Activated CD8-positive, alpha-beta T cell treated with anti-CD3 and anti-CD28 coated beads for 36 hours (primary cell): ENCODE measurements at regions of chr6 and their contacts with region 1.

Region 1: DNA sequence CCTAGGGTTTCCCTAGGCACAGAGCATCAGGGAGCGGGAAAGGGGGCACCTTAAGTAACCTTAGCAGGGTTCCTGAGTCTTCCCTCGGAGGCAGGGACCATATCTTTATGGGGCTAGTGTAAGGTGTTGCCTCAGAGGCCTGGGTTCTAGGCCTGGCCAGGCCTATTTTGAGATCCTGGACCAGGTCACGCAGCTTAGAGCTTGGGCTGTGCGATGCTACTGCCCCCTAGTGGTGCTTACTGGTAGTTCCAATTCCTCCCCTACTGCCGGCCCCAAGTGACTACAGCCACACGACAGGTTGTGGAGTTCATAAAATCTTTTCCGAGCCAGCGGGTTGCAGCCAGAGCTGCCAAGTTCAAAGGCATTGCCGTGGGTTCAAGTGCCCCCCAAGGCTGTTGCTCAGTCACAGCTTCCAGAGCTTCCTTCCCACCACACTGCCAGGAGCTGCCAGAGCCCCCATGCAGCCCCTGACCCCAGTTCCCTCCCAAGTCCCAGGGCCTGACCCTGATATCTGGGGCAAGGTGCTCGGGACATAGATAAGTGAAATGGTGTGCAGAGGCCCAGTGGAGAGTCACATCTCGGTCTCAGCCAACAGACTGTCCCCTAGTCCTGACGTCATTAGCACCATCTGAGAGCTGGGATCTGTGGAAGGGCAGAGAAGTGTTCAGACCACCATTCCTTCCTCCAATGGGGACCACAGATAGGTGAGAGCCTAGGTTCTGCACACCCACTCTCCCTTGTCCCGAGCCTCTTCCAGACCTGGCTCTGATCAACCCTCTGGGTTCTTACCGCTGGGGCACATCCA is 3.3 kb downstream of the LRRC73 start:
- DNase-seq: peak; percentile 90
- ATAC-seq: peak; percentile 85
- H3K4me3 Mint-ChIP-seq: no peak overlapping the region
- H3K27ac Mint-ChIP-seq: peak overlapping the region; percentile 25
- H3K4me1 Mint-ChIP-seq: peaks cover 8% of the 10 kb centered on the region
- H3K27me3 Mint-ChIP-seq: peaks cover 18% of the 10 kb centered on the region
- CTCF ChIP-seq: peak; percentile 89

Region 2: GRCh38 chr6:43228951-43229802 is 277.7 kb before region 1 on chr6 and contains the start of gene DNPH1:
- CTCF ChIA-PET with region 1: interaction called, 11 read pairs
- POLR2A ChIA-PET with region 1: interaction called, 3 read pairs
- intact Hi-C with region 1: no loop called
- DNase-seq: peak; percentile 78
- ATAC-seq: peak; percentile 75
- H3K4me3 Mint-ChIP-seq: peak within 1 kb of the TSS; percentile 95
- H3K27ac Mint-ChIP-seq: peak within 1 kb of the TSS; percentile 90
- H3K4me1 Mint-ChIP-seq: peaks cover 32% of the 10 kb centered on the region
- H3K27me3 Mint-ChIP-seq: no peaks in the 10 kb centered on the region
- CTCF ChIP-seq: peak; percentile 95
- total RNA-seq, gene DNPH1: 86.2 to 86.5 TPM

Region 3: GRCh38 chr6:43269273-43270007 is 237.4 kb before region 1 on chr6:
- CTCF ChIA-PET with region 1: interaction called, 5 read pairs
- POLR2A ChIA-PET with region 1: no interaction called
- intact Hi-C with region 1: loop called (anchors 5 kb)
- DNase-seq: peak; percentile 59
- ATAC-seq: peak; percentile 74
- H3K4me3 Mint-ChIP-seq: peak overlapping the region; percentile 31
- H3K27ac Mint-ChIP-seq: no peak overlapping the region
- H3K4me1 Mint-ChIP-seq: peaks cover 11% of the 10 kb centered on the region
- H3K27me3 Mint-ChIP-seq: peaks cover 16% of the 10 kb centered on the region
- CTCF ChIP-seq: no peak

Region 4: GRCh38 chr6:43308101-43308989 is 198.5 kb before region 1 on chr6 and contains the start of gene CRIP3:
- CTCF ChIA-PET with region 1: interaction called, 17 read pairs
- POLR2A ChIA-PET with region 1: no interaction called
- intact Hi-C with region 1: no loop called
- DNase-seq: peak; percentile 68
- ATAC-seq: peak; percentile 90
- H3K4me3 Mint-ChIP-seq: peak within 1 kb of the TSS; percentile 74
- H3K27ac Mint-ChIP-seq: no peak within 1 kb of the TSS
- H3K4me1 Mint-ChIP-seq: peaks cover 8% of the 10 kb centered on the region
- H3K27me3 Mint-ChIP-seq: peaks cover 3% of the 10 kb centered on the region
- CTCF ChIP-seq: peak; percentile 49
- total RNA-seq, gene CRIP3: 2.2 to 2.4 TPM

Region 5: DNA sequence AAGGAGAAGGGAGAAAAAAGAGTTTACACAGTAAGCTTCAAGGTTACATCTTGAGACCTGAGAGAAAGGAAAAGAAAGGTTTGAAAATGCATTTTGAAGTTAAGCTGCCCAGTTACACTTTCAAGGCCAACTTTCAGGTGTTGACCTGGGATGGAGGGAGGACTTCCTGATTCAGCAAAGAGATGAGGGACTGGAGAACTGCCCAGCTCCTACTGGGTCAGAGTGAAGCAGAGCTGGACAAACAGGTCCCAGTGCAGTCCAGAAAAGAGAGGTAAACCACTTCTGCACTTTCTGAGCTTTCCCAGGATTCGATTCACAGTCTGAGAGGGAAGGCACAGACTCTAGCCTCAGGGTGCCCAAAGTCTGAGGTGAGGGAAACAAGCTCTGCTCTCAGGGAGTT is 35.5 kb before region 1 on chr6:
- CTCF ChIA-PET with region 1: interaction called, 23 read pairs
- POLR2A ChIA-PET with region 1: no interaction called
- intact Hi-C with region 1: no loop called
- DNase-seq: no peak
- ATAC-seq: no peak
- H3K4me3 Mint-ChIP-seq: no peak overlapping the region
- H3K27ac Mint-ChIP-seq: no peak overlapping the region
- H3K4me1 Mint-ChIP-seq: no peaks in the 10 kb centered on the region
- H3K27me3 Mint-ChIP-seq: peaks cover 16% of the 10 kb centered on the region
- CTCF ChIP-seq: no peak

Region 6: DNA sequence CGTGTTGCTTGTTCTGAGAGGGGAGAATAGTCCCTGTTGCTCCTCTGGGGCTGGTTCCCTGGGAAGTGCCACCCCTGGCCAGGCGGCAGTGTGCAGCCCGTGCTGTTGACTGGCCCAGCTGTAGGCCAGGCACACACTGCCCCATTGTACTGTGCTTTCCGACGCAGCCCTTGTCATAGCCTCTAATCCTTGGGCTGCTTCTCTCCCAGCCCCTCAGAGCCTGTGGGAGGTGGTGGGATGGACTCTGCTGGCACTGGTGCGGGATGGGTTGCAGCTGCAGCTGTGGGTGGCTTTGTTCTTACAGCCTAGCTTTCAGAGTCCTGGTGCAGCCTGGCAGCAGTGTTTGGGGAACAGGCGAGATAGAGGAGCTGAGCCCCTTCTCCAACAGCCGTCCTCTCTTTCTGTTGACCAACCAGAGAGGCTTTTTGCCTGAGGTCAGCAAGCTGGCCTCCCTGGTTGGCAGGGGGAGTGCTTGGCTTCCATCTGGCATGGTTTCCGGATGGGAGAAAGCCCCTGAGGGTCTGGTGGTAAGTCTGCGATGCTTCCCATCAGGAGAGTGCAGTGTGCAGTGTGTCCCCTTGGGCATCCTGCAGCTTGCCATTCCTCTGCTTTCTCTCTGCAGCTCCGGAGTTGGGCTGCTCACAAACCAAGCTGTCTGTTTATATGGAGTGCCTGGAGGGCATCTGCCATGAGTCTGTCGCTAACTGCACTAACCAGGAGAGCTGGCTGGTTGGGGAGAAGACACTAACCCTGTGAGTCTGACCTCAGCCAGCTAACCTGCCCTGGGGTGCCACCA is 17.4 kb before region 1 on chr6:
- CTCF ChIA-PET with region 1: interaction called, 78 read pairs
- POLR2A ChIA-PET with region 1: interaction called, 5 read pairs
- intact Hi-C with region 1: no loop called
- DNase-seq: no peak
- ATAC-seq: no peak
- H3K4me3 Mint-ChIP-seq: no peak overlapping the region
- H3K27ac Mint-ChIP-seq: no peak overlapping the region
- H3K4me1 Mint-ChIP-seq: peaks cover 11% of the 10 kb centered on the region
- H3K27me3 Mint-ChIP-seq: no peaks in the 10 kb centered on the region
- CTCF ChIP-seq: no peak

Region 7: GRCh38 chr6:43516697-43517504 is 10.0 kb after region 1 on chr6 and contains the starts of genes POLR1C and YIPF3:
- CTCF ChIA-PET with region 1: interaction called, 59 read pairs
- POLR2A ChIA-PET with region 1: interaction called, 77 read pairs
- intact Hi-C with region 1: no loop called
- DNase-seq: peak; percentile 99
- ATAC-seq: peak; percentile 93
- H3K4me3 Mint-ChIP-seq: no peak within 1 kb of the TSS
- H3K27ac Mint-ChIP-seq: no peak within 1 kb of the TSS
- H3K4me1 Mint-ChIP-seq: peaks cover 34% of the 10 kb centered on the region
- H3K27me3 Mint-ChIP-seq: no peaks in the 10 kb centered on the region
- CTCF ChIP-seq: no peak
- total RNA-seq, gene POLR1C: 43.1 to 50.5 TPM
- total RNA-seq, gene YIPF3: 32.6 to 33.9 TPM